Lower leg skin (tissue), 4 donors: ENCODE measurements at regions of chr20 and their contacts with region 1.

Region 1: GRCh38 chr20:51311606-51312495 is 230.7 kb downstream of the NFATC2 start:
- DNase-seq: no peak
- H3K4me3 ChIP-seq: no peak overlapping the region
- CTCF ChIP-seq: no peak
- POLR2A ChIP-seq: no peak

Region 2: DNA sequence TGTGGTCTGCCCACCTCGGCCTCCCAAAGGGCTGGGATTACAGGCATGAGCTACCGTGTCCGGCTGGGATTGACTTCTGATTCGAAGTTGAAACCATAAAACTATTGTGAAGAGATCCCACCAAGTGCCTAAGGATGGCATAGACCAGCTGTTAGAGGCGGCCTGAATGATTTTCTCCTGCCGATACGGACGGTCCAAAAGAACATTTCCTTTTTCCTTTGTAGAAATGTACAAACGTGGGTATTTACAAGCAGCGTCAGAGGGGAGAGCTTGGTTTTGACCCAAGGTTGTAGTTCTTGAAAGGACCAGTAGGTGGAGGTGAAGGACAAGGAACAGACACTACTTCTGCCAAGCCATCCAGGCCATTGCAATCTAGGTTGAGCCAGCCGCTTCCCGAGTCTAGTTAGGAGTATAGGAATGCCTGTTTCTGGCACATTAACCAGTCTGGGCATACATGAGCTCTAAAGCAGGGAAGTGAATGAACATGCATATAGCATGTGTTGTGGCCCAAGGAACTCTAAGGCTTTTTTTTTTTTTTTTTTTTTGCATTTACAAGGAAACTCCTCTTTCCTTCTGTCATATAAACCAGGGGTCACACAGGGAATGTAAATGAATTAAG is 324.1 kb before region 1 on chr20:
- intact Hi-C with region 1: loop called (anchors 5 kb)
- DNase-seq: peak in 1 of 2 donors; percentile 81
- H3K4me3 ChIP-seq: no peak overlapping the region
- CTCF ChIP-seq: peak in 1 of 3 donors; percentile 93
- POLR2A ChIP-seq: no peak